ENCODE measurements at regions of chr9 and their contacts with region 1.

Region 1: DNA sequence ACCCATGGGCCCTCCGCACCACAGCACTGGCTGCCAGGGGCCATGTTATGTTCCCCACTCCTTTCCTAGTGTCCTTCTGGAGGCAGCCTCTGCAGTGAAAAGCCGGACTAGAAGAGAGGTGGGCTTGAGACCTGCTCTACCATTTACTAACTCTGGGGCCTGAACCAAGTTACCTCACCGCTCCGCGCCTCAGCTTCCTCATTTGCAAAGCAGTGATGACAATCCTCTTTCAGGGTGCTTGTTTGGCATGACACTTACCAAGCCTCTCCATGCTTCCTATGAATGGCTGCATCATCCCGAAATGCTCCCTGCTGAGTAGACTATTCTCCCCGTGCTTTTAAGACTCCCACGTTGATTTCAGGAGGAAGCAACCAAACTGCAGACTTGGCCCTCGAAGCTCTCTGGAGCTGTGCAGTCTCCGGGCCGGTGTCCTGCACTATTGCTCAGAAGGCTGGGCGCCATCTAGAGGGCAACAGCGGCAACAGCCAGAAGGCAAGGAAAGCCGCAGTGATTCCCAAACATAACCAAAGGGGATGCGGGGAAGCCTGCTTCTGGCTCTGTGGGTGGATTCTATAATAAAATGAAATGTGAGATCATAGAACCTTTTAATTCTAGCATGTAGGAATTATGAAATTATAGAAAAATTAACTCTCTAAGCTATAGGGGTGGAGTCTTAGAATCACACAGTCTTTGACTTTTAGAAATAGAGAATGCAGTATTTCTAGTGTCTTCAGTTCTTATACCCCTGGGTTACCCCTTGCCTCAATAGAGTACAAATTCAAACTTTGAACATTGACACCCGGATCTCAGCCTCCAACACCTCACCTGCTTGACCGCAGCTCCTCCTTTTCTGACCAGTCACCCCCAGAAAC is 599.8 kb upstream of the BRINP1 start:
- DNase-seq: peak; percentile 75
- CTCF ChIP-seq: peak; percentile 97

Region 2: GRCh38 chr9:119951090-119951489 is 18.0 kb before region 1 on chr9:
- CTCF ChIA-PET with region 1: interaction called, 14 read pairs
- POLR2A ChIA-PET with region 1: no interaction called
- DNase-seq: no peak
- CTCF ChIP-seq: no peak

Region 3: DNA sequence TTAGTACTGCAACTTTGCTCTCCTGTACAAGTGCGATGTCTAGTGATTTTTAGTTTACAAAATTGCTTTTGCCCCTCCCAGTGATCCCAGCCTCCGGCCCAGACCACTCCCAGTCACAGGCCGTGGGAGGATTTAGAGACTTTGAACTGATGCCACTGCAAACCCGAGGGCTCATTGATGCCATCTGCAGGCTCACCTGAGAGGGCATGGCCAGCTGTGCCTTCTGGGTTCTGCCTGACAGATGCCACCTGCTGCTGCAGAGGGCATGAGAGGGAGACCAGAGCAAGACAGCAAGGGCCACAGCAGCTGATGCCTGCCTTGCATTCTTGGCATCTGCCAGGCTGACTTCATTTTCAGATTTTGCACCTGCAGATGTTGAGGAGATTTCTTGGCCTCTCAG is 17.1 kb after region 1 on chr9:
- CTCF ChIA-PET with region 1: interaction called, 22 read pairs
- POLR2A ChIA-PET with region 1: no interaction called
- DNase-seq: no peak
- CTCF ChIP-seq: no peak

Region 4: DNA sequence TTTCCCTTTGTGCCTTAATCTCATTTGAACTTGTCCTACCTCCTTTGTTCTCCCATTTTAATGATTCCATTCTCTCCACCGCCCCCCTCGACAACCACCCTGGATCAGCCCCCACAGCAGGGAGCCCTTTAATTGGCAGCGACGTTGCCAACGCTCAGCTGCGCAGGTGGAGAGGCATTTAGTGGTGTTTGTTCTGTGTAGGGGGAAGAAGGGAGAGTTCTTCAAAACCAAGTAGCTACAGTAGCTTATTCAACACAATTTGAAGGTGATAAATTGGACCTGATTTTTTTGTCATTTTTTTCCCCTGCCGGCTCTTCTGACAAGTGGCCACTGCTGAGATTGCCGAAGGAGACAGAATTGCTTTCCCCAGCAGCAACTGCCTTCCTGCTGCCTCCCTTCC is 111.8 kb after region 1 on chr9:
- CTCF ChIA-PET with region 1: no interaction called
- POLR2A ChIA-PET with region 1: no interaction called
- DNase-seq: no peak
- CTCF ChIP-seq: no peak

Measured in GM10248 (cell line).